Activated CD4-positive, alpha-beta T cell treated with anti-CD3 and anti-CD28 coated beads for 36 hours (primary cell): ENCODE measurements at regions of chrX and their contacts with region 1.

Region 1: DNA sequence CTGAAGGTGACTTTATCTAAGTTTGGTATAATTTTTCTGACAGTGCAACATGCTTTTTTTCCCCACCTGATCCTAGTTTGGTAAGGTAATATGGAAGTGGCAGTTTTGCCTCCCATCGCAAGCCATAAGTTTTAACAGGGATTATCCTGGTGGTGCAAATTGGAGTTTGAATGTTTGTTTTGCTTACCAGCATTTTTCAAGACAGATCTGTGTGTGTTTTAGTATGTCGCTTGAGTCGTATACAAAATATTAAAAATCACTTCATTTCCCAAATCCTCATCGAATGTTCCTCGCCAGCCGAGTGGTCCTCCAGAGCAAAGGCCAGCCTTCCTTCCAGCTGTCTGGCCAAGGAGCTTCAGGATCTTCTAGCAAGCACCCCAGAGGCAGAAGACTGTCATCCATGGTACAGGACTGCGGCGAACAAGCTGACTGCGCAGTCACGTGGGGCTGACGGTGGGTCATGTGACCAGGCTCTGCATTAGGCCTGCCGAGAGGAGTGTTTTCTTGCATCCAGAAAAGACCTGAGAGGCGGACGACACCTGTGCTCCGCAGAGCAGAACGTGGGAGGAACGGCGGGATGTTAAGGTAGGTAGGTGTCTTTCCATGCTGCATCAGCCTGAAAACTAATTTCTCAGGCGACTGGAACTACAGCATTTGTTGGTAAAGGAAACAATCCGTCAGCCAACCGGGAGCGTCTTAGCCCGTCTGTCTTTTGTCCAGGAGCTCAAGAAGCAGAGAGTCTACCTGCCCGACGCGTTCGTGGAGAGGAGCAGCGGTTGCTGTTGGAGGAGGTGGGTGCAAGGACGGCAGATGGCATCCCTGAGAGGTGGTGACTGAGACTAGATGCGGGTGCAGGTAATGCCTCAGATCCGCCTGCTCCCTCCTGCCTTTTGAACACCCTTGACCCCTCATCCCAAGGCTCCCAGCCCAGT is at the start of gene GPRASP3:
- DNase-seq: peak; percentile 89
- ATAC-seq: peak; percentile 100
- H3K4me3 Mint-ChIP-seq: peak within 1 kb of the TSS; percentile 85
- H3K27ac Mint-ChIP-seq: peak within 1 kb of the TSS; percentile 79
- H3K4me1 Mint-ChIP-seq: peaks cover 7% of the 10 kb centered on the region
- H3K27me3 Mint-ChIP-seq: no peaks in the 10 kb centered on the region
- total RNA-seq, gene GPRASP3: 1.0 to 1.8 TPM

Region 2: DNA sequence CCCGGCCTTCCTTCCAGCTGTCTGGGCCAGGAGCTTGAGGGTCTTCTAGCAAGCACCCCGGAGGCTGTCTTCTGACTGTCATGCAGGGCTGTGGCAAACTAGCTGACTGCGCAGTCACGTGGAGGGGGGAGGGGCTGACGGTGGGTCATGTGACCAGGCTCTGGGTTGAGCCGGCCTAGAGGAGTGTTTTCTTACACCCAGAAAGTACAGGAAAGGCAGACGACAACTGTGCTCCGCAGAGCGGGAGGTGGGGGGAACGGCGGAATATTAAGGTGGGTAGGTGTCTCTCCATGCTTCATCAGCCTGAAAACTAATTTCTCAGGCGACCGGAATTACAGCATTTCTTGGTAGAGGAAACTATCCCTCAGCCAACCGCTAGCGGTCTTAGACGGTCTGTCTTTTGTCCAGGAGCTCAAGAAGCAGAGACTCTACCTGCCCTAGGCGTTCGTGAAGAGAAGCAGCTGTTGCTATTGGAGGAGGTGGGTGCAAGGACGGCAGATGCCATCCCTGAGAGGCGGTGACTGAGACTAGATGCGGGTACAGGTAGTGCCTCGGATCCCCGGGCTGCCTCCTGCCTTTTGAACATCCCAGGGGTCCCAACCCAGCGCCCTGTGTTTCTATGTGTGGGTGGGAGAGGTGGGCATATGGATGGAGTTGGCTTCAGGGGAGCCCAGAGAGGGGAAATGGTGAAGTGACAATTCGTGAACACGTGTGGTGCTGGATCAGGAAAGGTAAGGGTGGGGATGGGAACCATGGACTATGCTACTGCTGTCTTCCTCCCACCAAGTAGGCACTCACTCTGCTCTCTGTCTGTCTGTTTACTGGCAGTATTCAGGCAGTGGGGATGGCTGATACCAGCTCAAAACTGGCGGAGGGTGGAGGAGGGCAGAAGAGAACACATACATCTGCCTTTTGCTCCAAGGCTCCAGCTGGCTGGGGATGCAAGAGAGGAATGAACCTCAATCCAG is 60.4 kb before region 1 on chrX:
- CTCF ChIA-PET with region 1: no interaction called
- POLR2A ChIA-PET with region 1: no interaction called
- intact Hi-C with region 1: loop called in 1 of 2 experiments (anchors 2 kb)
- DNase-seq: peak; percentile 91
- ATAC-seq: peak; percentile 99
- H3K4me3 Mint-ChIP-seq: peak overlapping the region; percentile 87
- H3K27ac Mint-ChIP-seq: peak overlapping the region; percentile 92
- H3K4me1 Mint-ChIP-seq: peaks cover 23% of the 10 kb centered on the region
- H3K27me3 Mint-ChIP-seq: no peaks in the 10 kb centered on the region